ENCODE measurements at regions of chr6 and their contacts with region 1.

Region 1: DNA sequence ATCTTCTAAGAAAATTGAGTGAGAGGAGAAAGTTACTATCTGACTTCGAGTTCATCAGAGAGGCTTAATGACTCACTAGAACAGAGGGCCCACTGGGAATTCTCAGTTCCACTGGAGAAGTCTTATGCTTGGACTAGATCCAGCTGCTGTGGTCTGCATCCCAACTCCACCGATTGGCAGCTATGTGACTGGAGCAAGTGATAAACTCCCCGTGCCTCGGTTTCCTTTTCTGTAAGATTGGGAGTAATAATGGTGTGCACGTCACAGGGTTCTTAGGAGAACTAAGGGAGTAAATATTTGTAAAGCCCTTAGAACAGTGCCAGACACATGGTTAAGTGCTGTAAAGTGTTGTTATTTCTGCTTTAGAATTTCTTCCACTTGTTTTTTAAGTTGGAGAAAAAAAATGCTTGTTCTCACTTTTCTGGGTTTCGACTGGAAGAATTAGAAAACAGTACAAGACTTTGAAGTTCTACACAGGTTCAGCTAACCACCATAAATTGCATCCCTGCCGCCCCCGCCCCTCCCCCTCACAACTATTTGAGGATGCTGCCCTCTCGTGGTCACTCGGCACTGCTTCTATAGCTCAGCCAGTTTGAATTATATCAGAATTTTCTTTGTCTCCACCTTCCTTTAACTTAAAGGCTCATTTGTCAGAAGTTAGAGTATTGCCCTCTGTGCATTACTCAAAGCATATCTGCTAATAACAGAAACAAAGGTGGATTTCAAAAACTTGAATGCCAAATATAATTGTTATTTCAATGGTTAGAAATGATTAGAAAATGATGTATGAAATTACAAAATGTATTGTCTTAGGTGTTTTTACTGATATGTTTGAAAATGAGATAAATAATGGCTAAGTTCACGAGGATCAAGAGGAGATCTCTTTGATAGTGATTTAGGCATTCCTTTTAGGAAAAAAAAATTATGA is 95.0 kb upstream of the IFNGR1 start:
- DNase-seq: peak; percentile 38
- H3K4me3 ChIP-seq: no peak overlapping the region
- H3K27ac ChIP-seq: no peak overlapping the region
- H3K27me3 ChIP-seq: no peaks in the 10 kb centered on the region
- CTCF ChIP-seq: peak; percentile 90

Region 2: DNA sequence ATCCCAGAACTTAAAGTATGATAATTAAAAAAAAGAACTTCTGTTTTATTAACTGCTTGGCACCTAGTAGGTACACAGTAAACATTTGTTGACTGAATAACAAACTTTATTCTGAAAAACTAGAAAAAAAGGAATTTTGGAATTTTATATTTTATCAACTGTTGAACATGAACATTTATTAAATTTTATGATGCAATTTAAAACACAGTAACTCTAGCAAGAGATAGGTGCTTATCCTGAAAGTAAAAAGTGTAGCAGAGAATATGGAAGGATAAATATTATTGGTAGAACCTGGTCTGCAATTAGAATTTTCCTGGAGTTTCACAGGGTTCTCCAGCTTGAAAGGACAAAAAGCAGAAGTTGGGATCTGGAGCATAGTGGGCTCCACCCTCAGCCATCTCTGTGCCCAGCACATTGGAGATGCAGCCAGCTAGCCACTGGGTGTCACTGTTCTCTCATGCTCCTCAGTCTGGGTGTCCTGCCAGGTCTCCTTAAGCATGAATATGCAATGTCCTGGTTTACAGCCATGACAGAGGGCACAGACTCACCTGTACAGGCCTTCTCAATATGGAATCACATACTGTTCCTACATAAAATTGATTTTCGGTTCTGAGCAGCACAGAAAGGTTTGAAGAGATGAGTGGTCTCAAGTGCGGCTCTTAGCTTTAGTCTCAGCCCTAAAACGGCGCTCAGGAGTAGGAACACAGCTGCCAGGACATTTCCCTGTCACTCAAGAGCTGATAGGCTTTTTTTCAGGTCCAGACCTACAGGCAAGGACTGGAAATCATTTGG is 237.7 kb before region 1 on chr6:
- CTCF ChIA-PET with region 1: interaction called, 12 read pairs
- POLR2A ChIA-PET with region 1: no interaction called
- DNase-seq: peak; percentile 6
- H3K4me3 ChIP-seq: no peak overlapping the region
- H3K27ac ChIP-seq: no peak overlapping the region
- H3K27me3 ChIP-seq: peaks cover 3% of the 10 kb centered on the region
- CTCF ChIP-seq: peak; percentile 72

Region 3: GRCh38 chr6:137094411-137095008 is 219.7 kb before region 1 on chr6:
- CTCF ChIA-PET with region 1: interaction called, 84 read pairs
- POLR2A ChIA-PET with region 1: no interaction called
- DNase-seq: peak; percentile 34
- H3K4me3 ChIP-seq: no peak overlapping the region
- H3K27ac ChIP-seq: no peak overlapping the region
- H3K27me3 ChIP-seq: peaks cover 2% of the 10 kb centered on the region
- CTCF ChIP-seq: peak; percentile 77

Region 4: GRCh38 chr6:137112067-137112355 is 202.2 kb before region 1 on chr6:
- CTCF ChIA-PET with region 1: no interaction called
- POLR2A ChIA-PET with region 1: no interaction called
- DNase-seq: no peak
- H3K4me3 ChIP-seq: no peak overlapping the region
- H3K27ac ChIP-seq: no peak overlapping the region
- H3K27me3 ChIP-seq: no peaks in the 10 kb centered on the region
- CTCF ChIP-seq: no peak

Region 5: DNA sequence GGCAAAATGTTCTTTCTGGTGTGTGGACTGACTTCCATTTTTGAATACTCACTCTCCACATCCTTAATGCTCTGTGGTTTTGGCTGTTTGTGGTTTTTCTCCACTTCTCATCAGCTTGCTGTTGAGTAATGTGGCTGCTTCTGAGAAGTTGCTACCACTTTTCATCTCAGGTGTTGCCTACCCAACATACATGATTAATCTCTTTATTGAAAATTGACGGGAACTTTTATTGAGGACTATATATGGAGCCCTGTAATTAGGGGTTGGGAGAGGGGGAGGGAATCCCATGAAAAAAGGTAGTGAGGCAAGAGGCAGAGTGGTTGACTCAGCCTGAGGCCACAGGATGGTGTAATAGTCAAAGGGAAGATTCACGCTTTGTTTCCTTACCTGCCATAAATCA is 158.4 kb before region 1 on chr6:
- CTCF ChIA-PET with region 1: no interaction called
- POLR2A ChIA-PET with region 1: no interaction called
- DNase-seq: no peak
- H3K4me3 ChIP-seq: no peak overlapping the region
- H3K27ac ChIP-seq: no peak overlapping the region
- H3K27me3 ChIP-seq: no peaks in the 10 kb centered on the region
- CTCF ChIP-seq: no peak

Region 6: GRCh38 chr6:137277971-137278637 is 36.1 kb before region 1 on chr6:
- CTCF ChIA-PET with region 1: interaction called, 38 read pairs
- POLR2A ChIA-PET with region 1: no interaction called
- DNase-seq: peak; percentile 41
- H3K4me3 ChIP-seq: no peak overlapping the region
- H3K27ac ChIP-seq: no peak overlapping the region
- H3K27me3 ChIP-seq: no peaks in the 10 kb centered on the region
- CTCF ChIP-seq: no peak

Region 7: GRCh38 chr6:137291441-137291840 is 22.8 kb before region 1 on chr6:
- CTCF ChIA-PET with region 1: interaction called, 19 read pairs
- POLR2A ChIA-PET with region 1: no interaction called
- DNase-seq: no peak
- H3K4me3 ChIP-seq: no peak overlapping the region
- H3K27ac ChIP-seq: no peak overlapping the region
- H3K27me3 ChIP-seq: no peaks in the 10 kb centered on the region
- CTCF ChIP-seq: no peak

Region 8: DNA sequence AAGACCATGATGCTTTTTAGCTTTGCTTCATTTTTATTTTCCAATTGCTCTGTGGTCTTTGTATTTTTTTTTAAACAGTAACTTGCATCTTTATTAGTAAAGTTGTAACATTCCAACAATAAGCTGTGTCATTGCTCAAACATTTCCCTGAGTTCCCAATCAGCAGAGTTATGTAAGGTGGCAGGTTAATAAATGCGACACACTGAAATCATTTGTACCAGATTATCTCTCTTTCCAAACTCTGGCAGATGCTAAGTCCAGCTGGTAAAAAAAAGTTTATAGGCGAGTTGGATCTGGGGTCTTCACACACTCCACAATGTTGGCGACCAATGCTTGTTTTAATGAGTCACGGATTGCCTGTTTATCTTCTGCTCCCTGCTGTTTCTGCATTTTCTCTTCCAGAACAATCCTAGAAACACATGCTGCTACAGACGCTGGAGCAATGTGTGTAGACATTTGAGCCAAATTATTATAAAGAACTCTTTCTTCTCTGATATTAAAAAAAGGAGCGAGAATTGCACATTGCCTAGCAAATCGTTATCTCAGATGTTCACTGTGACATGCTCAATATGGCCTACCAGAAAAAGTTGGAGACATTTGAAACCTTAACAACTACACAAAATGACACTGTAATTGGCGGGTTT is 18.6 kb after region 1 on chr6:
- CTCF ChIA-PET with region 1: interaction called, 12 read pairs
- POLR2A ChIA-PET with region 1: no interaction called
- DNase-seq: no peak
- H3K4me3 ChIP-seq: no peak overlapping the region
- H3K27ac ChIP-seq: no peak overlapping the region
- H3K27me3 ChIP-seq: peaks cover 2% of the 10 kb centered on the region
- CTCF ChIP-seq: no peak

Region 9: GRCh38 chr6:137349856-137350830 is 36.0 kb after region 1 on chr6:
- CTCF ChIA-PET with region 1: interaction called, 18 read pairs
- POLR2A ChIA-PET with region 1: no interaction called
- DNase-seq: no peak
- H3K4me3 ChIP-seq: no peak overlapping the region
- H3K27ac ChIP-seq: no peak overlapping the region
- H3K27me3 ChIP-seq: peaks cover 6% of the 10 kb centered on the region
- CTCF ChIP-seq: no peak

Measured in AG04450 (cell line).